ENCODE measurements at regions of chr2 and their contacts with region 1.

Region 1: DNA sequence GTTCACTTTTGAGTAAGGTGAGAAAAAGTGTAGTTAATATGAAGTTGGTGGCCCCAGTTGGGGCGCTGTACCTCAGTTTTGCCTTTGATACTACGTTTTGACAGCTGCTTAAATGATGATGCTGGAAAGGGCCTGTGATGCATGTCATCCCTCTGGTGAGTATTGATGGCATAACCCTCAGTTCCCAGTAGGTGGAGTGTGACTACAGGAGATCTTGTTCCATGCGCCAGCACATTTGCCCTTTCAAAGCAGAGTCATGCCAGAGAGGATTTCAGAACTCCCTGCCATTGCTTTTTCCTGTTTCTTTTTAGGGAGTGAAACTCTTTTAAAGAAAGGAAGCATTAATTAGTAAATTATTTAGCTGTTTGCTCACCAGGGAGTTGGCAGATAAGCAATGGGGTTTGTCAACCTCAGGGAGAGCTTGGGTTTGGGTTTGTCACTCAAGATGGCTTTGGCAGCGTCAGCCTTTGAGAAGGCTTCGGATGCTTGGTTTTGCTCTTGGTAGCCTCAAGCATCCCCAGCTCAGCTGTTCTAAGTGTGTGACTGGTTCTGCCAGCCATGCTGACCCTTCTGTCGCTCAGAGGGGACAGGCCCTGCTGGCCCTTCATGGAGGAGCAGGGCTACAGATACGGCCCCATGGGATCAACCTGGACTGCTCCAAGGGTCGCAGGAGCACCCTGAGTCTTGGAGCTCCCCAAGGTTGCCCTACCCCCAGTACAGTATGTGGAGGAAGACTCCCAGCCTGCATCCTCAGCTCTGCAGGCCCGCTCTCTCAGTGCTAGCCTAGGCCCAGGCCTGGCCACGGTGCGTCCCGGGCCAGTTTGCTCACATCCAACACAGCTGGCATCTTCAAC is 29.1 kb downstream of the ARMC9 start:
- DNase-seq: peak; percentile 65
- ATAC-seq: peak; percentile 98
- H3K4me3 Mint-ChIP-seq: no peak overlapping the region
- H3K27ac Mint-ChIP-seq: no peak overlapping the region
- H3K4me1 Mint-ChIP-seq: no peaks in the 10 kb centered on the region
- H3K27me3 Mint-ChIP-seq: no peaks in the 10 kb centered on the region
- CTCF ChIP-seq: peak; percentile 66

Region 2: DNA sequence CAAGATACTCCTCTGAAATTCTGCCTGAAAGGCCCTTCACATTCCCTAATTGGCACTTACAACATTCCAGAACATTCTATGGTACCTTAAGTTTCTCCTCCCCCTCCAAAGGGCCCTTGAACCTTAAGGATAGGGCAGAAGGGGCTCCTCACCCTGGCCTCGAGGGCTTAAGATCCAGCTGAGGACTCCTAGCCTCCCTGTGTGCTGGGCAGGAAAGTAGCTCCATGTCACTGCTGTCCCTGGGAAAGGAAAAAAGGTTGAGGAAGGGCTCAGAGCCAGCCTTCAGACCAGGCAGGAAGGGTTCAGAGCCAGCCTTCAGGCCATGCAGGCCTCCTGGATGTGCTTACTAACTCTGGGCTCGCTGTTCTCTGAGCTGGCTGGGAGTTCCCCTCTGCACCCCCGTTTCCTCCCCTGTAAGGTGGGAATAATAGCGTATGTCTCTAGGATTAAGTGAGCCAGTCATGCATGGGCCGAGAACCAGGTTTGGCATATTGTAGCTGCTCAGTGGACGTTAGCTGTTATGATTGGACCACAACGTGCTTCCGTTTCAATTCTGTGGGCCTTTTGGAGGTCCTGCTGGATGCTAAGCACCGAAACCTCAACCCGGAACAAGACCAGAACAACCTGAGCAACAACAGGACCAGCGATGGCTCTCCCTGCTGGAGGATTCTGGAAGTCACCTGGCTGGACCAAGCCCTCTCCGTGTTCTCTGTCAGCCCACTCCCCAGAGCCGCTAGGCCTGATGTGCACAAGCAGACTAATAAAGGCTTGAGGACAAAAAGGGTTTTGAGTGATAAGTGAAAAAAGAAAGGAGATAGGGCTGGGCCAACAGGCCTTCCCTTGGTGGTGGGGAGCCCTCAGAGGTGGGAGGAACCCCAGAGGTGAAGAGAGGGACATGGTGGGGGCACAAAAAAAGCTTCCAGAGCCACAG is 166.9 kb after region 1 on chr2:
- CTCF ChIA-PET with region 1: interaction called, 12 read pairs
- POLR2A ChIA-PET with region 1: no interaction called
- intact Hi-C with region 1: no loop called
- DNase-seq: no peak
- ATAC-seq: no peak
- H3K4me3 Mint-ChIP-seq: peak overlapping the region; percentile 50
- H3K27ac Mint-ChIP-seq: peak overlapping the region; percentile 46
- H3K4me1 Mint-ChIP-seq: peaks cover 21% of the 10 kb centered on the region
- H3K27me3 Mint-ChIP-seq: peaks cover 23% of the 10 kb centered on the region
- CTCF ChIP-seq: no peak

Measured in activated CD8-positive, alpha-beta T cell treated with anti-CD3 and anti-CD28 coated beads for 36 hours (primary cell).